ENCODE measurements at regions of chr19 and their contacts with region 1.

Region 1: DNA sequence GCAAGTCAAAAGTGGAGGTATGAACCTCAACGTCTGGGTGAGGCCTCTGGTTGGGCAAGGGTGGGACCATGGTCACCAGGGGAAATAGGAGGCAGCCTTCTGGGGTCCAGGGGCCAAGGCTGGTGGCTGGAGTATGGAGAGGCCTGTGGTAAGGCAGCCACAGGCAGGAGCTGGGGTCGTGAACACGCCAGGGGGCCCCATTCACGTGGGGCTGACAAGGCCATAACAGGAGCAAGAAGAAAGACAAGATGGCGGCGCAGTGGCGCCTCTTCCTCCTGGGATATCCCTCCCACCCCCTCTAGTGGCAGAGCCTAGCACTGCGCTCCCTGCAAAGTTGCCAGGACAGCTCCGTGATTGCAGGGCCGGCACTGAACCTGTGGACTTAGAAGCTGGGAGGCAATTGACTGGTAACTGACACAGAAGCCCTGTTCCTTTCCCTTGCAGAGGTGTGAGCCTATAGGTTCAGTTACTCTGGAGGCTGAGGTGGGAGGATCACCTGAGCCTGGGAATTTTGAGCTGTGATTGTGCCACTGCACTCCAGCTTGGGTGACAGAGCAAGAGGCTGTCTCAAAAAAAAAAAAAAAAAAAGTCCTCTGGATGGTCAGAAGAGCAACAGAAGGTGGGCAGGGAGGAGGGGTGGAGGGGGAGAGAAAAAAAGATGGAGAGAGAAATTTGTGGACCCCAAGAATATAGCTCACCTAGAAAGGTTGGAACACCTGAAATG is 19.7 kb upstream of the EDDM13 start:
- DNase-seq: peak; percentile 76
- ATAC-seq: peak; percentile 76
- H3K4me3 ChIP-seq: no peak overlapping the region
- H3K4me3 Mint-ChIP-seq: no peak overlapping the region
- H3K27ac ChIP-seq: no peak overlapping the region
- H3K27ac Mint-ChIP-seq: peak overlapping the region; percentile 63
- H3K4me1 ChIP-seq: peaks cover 0 to 2% of the 10 kb centered on the region in 2 donors
- H3K4me1 Mint-ChIP-seq: no peaks in the 10 kb centered on the region
- H3K27me3 ChIP-seq: no peaks in the 10 kb centered on the region
- H3K27me3 Mint-ChIP-seq: no peaks in the 10 kb centered on the region
- CTCF ChIP-seq: peak; percentile 73

Region 2: GRCh38 chr19:56221399-56221798 is 31.5 kb before region 1 on chr19:
- CTCF ChIA-PET with region 1: no interaction called
- POLR2A ChIA-PET with region 1: no interaction called
- intact Hi-C with region 1: no loop called
- DNase-seq: no peak
- ATAC-seq: no peak
- H3K4me3 ChIP-seq: no peak overlapping the region
- H3K4me3 Mint-ChIP-seq: no peak overlapping the region
- H3K27ac ChIP-seq: no peak overlapping the region
- H3K27ac Mint-ChIP-seq: no peak overlapping the region
- H3K4me1 ChIP-seq: peaks cover 4 to 6% of the 10 kb centered on the region in 2 donors
- H3K4me1 Mint-ChIP-seq: peaks cover 6% of the 10 kb centered on the region
- H3K27me3 ChIP-seq: peaks cover 0 to 11% (median 4%) of the 10 kb centered on the region in 4 experiments
- H3K27me3 Mint-ChIP-seq: peaks cover 9% of the 10 kb centered on the region
- CTCF ChIP-seq: no peak

Region 3: DNA sequence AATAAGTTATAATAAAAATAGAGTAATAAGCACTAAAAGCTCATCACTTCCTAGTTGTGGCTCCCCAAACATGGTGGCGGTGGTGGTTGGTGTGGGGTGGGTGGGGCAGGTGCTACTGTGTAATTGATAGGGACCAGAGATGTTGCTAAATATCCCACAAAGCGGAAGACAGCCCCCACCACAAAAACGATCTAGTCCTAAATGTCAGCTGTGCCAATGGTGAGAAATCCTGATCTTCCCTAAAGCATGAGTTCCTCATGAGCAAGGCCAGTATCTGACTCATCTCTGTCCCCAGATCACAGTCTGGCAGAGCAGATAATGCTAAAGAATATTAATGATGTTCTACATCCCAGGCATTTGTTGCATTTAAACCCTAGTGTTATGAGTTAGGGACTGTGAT is 17.8 kb after region 1 on chr19:
- CTCF ChIA-PET with region 1: interaction called, 21 read pairs
- POLR2A ChIA-PET with region 1: no interaction called
- intact Hi-C with region 1: no loop called
- DNase-seq: no peak
- ATAC-seq: no peak
- H3K4me3 ChIP-seq: no peak overlapping the region
- H3K4me3 Mint-ChIP-seq: no peak overlapping the region
- H3K27ac ChIP-seq: no peak overlapping the region
- H3K27ac Mint-ChIP-seq: no peak overlapping the region
- H3K4me1 ChIP-seq: no peaks in the 10 kb centered on the region
- H3K4me1 Mint-ChIP-seq: no peaks in the 10 kb centered on the region
- H3K27me3 ChIP-seq: no peaks in the 10 kb centered on the region
- H3K27me3 Mint-ChIP-seq: no peaks in the 10 kb centered on the region
- CTCF ChIP-seq: no peak

Region 4: GRCh38 chr19:56350416-56351045 is 97.7 kb after region 1 on chr19:
- CTCF ChIA-PET with region 1: interaction called, 16 read pairs
- POLR2A ChIA-PET with region 1: no interaction called
- intact Hi-C with region 1: no loop called
- DNase-seq: peak; percentile 70
- ATAC-seq: peak; percentile 56
- H3K4me3 ChIP-seq: no peak overlapping the region
- H3K4me3 Mint-ChIP-seq: no peak overlapping the region
- H3K27ac ChIP-seq: no peak overlapping the region
- H3K27ac Mint-ChIP-seq: no peak overlapping the region
- H3K4me1 ChIP-seq: no peaks in the 10 kb centered on the region
- H3K4me1 Mint-ChIP-seq: peaks cover 2% of the 10 kb centered on the region
- H3K27me3 ChIP-seq: no peaks in the 10 kb centered on the region
- H3K27me3 Mint-ChIP-seq: no peaks in the 10 kb centered on the region
- CTCF ChIP-seq: peak; percentile 99

Region 5: DNA sequence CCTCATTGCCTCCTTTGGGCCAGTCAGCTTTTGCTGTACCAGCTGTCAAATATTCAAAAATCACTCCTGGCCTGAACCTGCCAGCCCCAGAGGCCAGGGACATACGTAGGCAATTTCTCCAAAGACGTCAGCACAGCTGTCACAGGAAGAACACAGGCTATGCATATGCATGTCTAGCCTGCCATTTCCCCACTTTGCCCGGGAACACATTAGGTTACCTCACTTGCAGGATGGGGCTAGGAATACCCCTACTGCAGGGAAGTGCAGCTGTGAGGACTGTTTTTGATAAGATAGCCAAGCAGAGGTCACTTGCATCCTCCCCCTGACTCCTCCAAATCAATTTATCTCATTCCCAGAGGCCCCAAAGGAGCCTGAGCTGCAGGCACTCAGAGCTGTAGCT is 221.4 kb after region 1 on chr19:
- CTCF ChIA-PET with region 1: no interaction called
- POLR2A ChIA-PET with region 1: no interaction called
- intact Hi-C with region 1: no loop called
- DNase-seq: no peak
- ATAC-seq: no peak
- H3K4me3 ChIP-seq: no peak overlapping the region
- H3K4me3 Mint-ChIP-seq: no peak overlapping the region
- H3K27ac ChIP-seq: no peak overlapping the region
- H3K27ac Mint-ChIP-seq: no peak overlapping the region
- H3K4me1 ChIP-seq: peaks cover 11 to 20% of the 10 kb centered on the region in 2 donors
- H3K4me1 Mint-ChIP-seq: peaks cover 18% of the 10 kb centered on the region
- H3K27me3 ChIP-seq: no peaks in the 10 kb centered on the region
- H3K27me3 Mint-ChIP-seq: peaks cover 19% of the 10 kb centered on the region
- CTCF ChIP-seq: no peak